H1 (cell line): ENCODE measurements at regions of chr11 and their contacts with region 1.

Region 1: DNA sequence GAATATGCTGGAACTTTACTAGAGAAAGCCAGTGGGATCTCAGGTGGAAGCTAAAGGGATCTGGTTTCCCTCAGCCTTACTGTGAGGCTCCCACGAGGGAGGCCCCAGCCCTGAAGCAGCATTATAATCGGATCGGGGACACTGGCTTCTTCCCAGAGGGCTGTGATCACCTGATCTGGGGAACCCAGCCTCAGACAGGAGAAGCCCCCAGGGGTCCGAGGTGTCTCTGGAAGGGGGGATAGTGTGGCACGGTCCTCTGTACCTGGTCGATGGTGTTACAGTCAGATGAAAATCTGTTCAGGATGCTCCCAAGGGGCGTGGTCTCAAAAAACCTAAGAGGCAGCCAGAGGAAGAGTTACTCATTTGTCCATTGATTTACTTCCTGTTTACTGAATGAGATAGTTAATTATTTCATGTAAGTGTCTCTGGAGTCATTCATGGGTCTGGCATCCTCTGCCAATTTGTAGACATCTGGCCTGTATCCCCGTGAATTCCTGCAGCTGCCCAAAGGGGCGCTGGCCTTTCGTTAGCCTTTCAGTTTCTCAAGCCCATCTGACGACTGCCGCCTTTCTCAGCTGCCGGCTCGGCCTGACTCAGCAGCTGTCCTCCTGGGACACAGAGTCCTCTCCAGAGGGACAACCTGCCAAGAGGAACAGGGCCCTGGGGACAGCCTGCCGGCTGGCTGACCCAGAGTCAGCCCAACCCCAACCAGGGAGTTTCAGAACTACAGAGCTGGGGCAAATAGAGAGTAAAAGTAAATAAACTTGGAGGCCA is 17.0 kb upstream of the KCNJ11 start:
- DNase-seq: peak in 1 of 2 experiments; percentile 55
- H3K4me3 ChIP-seq: no peak overlapping the region
- H3K27ac ChIP-seq: no peak overlapping the region
- H3K4me1 ChIP-seq: no peaks in the 10 kb centered on the region
- H3K27me3 ChIP-seq: no peaks in the 10 kb centered on the region
- CTCF ChIP-seq: peak; percentile 26 to 59 (median 57)
- EP300 ChIP-seq: no peak
- POLR2A ChIP-seq: no peak
- RAD21 ChIP-seq: peak; percentile 32 to 53

Region 2: DNA sequence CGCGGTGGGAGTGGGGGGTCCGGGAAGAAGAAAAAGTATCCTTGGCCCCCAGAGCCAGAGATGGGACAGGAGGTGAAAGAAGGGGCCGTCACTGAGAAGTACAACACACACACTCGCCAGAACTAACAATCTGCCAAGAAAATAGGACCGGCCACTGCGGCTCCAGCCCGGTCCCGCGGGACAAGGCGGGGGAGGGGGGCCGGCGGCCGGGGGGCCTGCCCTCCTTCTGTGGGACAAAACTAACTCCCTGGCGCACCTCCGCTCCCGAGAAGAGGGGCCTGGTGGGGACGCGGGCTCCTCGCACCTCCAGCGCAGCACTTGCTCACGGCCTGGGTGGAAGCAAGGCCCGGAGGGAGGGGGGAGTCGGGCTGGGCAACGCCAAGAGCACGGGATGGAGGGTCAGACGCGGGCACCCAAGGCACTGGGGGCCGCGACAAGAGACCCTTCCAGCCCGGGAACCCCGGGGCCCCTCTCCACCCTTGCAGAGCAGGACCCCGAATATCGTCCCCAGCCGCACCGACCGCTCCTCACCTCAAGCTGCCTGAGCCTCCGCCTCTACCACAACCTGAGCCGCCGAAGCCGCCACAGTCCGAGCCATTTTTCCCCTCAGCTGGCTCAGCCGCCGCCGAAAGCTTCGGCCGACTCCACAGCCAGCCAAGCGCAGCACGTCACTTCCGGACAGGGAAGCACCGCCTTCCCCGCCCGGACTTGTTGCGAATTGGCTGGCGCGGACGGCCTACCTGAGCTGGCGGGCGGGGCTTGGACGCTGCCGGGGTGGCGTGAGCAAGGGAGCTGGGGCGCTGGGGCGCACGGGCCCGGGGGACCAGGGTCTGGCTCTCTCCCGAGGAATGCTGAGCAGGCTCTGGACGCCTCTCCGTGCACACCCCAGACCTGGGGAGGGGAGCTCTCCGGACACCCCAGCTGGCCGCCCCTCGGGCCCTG is 197.8 kb before region 1 on chr11 and contains the start of gene PIK3C2A:
- CTCF ChIA-PET with region 1: no interaction called
- POLR2A ChIA-PET with region 1: no interaction called
- DNase-seq: peak; percentile 84 to 98
- H3K4me3 ChIP-seq: peak within 1 kb of the TSS; percentile 70 to 92 (median 82)
- H3K27ac ChIP-seq: peak within 1 kb of the TSS; percentile 97
- H3K4me1 ChIP-seq: no peaks in the 10 kb centered on the region; a peak in 2 of 7 replicates
- H3K27me3 ChIP-seq: no peaks in the 10 kb centered on the region
- CTCF ChIP-seq: no peak
- EP300 ChIP-seq: no peak
- POLR2A ChIP-seq: peak; percentile 98
- RAD21 ChIP-seq: no peak
- total RNA-seq, gene PIK3C2A: 117 and 127 TPM in 2 replicates

Region 3: DNA sequence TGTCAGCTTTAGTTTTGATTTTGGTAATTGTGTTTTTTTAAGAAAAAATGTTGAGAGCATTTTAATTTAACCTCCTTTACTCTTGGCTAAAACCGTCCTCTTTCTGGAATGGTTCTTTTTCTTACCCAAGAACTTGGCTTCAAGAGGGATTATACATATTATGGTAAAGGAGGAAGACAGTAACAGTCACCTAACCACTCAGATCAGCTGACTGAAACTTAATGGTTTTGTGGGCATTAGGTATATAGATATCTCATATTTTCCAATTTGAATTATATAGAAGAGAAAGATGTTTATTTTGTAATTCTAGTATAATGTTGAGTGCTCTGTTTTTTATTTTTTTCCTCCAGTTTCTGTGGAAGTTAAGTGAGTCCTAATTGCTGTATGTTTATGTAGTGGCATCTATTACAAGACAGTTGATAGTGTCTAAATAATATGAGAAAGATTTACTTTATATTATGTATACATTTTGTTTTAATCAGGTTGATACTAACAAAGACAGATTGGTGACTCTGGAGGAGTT is 90.5 kb before region 1 on chr11:
- CTCF ChIA-PET with region 1: no interaction called
- POLR2A ChIA-PET with region 1: no interaction called
- DNase-seq: no peak
- H3K4me3 ChIP-seq: no peak overlapping the region
- H3K27ac ChIP-seq: no peak overlapping the region
- H3K4me1 ChIP-seq: no peaks in the 10 kb centered on the region
- H3K27me3 ChIP-seq: no peaks in the 10 kb centered on the region
- CTCF ChIP-seq: no peak
- EP300 ChIP-seq: no peak
- POLR2A ChIP-seq: no peak
- RAD21 ChIP-seq: no peak

Region 4: DNA sequence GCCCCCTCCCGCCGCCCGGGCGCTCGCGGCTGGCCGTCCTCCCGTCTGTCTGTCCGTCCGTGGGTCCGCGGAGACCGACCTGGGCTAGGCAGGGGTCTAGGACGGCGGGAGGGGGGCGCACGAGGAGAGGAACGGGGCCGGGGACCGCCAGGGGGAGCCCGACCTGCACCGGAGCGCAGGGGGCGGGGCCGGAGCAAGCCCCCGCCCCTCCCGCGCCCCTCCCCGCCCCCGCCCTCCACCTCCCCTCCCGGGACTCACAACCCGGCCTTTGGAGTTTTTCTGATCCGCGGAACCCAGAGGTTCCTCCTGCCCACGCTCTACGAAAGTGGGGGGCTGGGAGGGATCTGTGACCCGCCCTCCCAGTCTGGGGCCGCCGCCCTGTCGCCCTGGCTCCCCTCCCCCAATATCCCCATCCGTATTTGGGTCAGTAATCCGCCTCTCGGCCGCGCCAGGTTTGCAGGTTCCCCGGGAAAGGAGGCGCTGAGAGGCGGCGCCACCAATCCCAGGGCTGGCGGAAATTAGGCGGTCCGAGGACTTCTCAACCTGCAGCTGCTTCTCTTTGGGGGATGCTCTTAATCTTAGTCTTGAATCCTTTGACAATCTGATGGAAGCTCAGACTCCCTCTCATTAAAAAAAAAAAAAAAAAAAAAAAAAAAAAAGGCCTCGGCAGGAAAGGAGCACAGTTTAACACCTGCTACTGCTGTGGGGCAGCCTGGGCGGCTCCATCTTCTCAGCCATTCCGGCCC is 16.0 kb before region 1 on chr11:
- CTCF ChIA-PET with region 1: interaction called, 37 read pairs
- POLR2A ChIA-PET with region 1: interaction called, 6 read pairs
- DNase-seq: peak; percentile 53 to 92
- H3K4me3 ChIP-seq: peak overlapping the region; percentile 51 to 80 (median 60)
- H3K27ac ChIP-seq: no peak overlapping the region
- H3K4me1 ChIP-seq: peaks cover 0 to 9% (median 2%) of the 10 kb centered on the region in 4 experiments; a peak in 3 of 7 replicates
- H3K27me3 ChIP-seq: peaks cover 0 to 7% (median 0%) of the 10 kb centered on the region in 4 experiments; a peak in 4 of 7 replicates
- CTCF ChIP-seq: peak; percentile 41 to 82 (median 78)
- EP300 ChIP-seq: peak in 1 of 2 experiments; percentile 6; a peak in 1 of 3 replicates
- POLR2A ChIP-seq: no peak
- RAD21 ChIP-seq: peak; percentile 26 to 43; a peak in 3 of 4 replicates

Region 5: DNA sequence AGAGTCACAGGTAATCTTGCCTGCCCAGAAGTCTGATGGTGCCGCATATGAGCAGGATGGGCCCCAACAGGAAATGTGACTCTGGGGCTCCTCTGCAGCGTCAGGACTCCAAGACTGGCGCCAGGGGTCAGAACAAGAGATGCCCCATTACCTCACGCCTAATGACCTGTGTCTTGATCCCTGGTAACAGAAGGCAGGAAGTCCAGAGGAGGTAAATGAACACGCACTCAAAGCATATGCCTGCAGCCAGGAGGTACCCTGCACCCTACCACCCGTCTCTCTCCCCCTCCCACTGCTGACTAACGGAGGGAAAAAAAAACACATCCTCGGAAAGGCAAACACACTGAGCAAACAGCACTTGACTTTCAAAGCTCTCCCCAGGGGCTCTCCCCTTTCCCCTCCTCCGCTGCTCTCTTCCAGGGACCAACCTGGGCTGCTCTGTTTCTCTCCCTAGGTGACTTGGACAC is 33.9 kb after region 1 on chr11:
- CTCF ChIA-PET with region 1: interaction called, 11 read pairs
- POLR2A ChIA-PET with region 1: no interaction called
- DNase-seq: no peak
- H3K4me3 ChIP-seq: no peak overlapping the region
- H3K27ac ChIP-seq: no peak overlapping the region
- H3K4me1 ChIP-seq: peaks cover 0 to 4% (median 1%) of the 10 kb centered on the region in 4 experiments; a peak in 4 of 7 replicates
- H3K27me3 ChIP-seq: peaks cover 1 to 29% (median 26%) of the 10 kb centered on the region in 4 experiments; a peak in 6 of 7 replicates
- CTCF ChIP-seq: no peak
- EP300 ChIP-seq: no peak
- POLR2A ChIP-seq: no peak
- RAD21 ChIP-seq: no peak

Region 6: GRCh38 chr11:17635551-17635938 is 230.1 kb after region 1 on chr11:
- CTCF ChIA-PET with region 1: no interaction called
- POLR2A ChIA-PET with region 1: no interaction called
- DNase-seq: no peak
- H3K4me3 ChIP-seq: no peak overlapping the region
- H3K27ac ChIP-seq: no peak overlapping the region
- H3K4me1 ChIP-seq: no peaks in the 10 kb centered on the region
- H3K27me3 ChIP-seq: no peaks in the 10 kb centered on the region
- CTCF ChIP-seq: peak; percentile 47 to 56 (median 53)
- EP300 ChIP-seq: no peak
- POLR2A ChIP-seq: no peak
- RAD21 ChIP-seq: peak; percentile 24 to 36; a peak in 2 of 4 replicates

Region 7: DNA sequence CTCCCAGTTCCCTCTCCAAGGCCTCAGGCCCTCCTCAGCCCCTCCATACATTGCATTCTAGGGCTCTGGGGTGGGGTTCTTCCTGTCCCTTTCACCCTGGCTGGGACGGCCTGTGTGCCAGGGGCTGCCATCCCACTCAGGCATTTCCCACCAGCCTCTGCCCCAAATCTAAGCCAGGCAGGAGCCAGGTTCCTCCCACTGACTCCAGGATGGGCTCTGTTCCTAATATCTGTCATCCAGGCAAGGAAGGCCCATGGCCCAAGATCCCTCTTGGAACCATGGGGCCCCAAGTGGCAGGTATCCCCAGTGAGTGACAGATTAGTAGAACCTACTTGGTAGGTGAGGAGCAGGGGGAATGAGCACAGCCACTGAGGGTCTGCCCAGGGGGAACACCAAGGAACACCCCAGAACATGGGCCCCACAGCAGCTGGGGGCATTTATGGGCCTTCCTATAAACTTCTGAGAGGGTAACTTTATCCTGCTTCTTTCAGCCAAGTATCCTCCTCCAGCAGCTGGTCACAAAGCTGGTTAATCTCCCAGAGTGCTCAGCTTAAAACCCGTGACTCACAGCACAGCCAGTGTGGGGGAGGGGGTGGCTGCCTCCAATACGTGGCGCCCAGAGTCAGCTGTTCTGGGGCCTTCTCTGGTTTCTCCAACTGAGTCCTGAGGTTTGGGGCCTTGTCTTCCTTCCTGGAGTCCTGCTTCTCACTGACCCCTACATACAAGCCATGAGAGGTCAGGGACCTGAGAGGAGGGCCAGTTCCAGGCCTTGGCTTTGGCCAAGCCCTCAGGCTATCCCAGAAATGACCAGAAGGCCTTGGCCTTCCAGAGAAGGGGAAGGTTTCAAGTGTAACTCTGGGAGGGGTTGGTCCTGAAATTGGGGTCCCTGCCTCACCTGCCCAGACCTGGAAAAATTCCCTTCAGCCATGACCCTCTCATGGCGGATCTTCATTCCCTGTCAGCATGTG is 294.0 kb after region 1 on chr11:
- CTCF ChIA-PET with region 1: no interaction called
- POLR2A ChIA-PET with region 1: no interaction called
- DNase-seq: no peak
- H3K4me3 ChIP-seq: no peak overlapping the region
- H3K27ac ChIP-seq: no peak overlapping the region
- H3K4me1 ChIP-seq: no peaks in the 10 kb centered on the region; a peak in 1 of 7 replicates
- H3K27me3 ChIP-seq: peaks cover 5 to 29% (median 26%) of the 10 kb centered on the region in 4 experiments
- CTCF ChIP-seq: no peak
- EP300 ChIP-seq: no peak
- POLR2A ChIP-seq: no peak
- RAD21 ChIP-seq: no peak